ENCODE measurements at regions of chr5 and their contacts with region 1.

Region 1: DNA sequence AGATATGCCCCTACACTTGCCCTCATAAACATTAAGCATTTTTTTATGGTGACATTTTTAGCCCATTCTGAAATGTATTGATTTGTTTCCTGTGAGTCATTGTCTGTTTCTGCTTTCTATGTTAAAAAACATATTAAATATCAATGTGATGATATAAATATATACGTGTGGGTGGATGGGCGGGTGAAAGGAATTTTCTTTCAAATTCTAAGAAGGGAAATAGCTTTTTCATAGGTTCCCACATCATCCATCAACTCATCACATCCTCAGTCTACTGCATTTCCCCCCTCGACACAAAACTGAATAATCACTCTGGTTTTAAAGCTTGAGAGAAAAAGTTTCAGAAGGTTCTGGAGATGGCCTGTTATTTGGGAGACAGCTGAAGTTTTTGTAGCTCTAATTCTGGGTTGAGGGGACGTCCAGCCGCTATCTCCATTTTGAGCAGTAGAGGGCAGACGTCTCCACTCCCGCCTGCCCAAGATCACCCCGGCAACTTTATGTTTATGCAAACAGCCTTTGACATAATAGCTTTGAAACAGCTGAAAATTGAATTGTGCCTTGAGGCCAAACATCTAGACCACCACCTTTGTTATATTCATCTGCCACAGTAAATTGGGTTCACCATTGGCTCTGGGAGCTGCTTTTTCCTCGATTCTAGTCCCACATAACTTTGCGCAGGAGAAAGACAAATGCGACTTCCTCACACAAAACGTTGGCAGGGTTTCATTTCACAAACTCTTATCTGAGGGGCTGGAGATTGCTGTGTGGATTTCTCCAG is 216.2 kb upstream of the CLINT1 start:
- DNase-seq: peak; percentile 12
- H3K4me3 Mint-ChIP-seq: no peak overlapping the region
- H3K27ac Mint-ChIP-seq: no peak overlapping the region
- H3K4me1 Mint-ChIP-seq: no peaks in the 10 kb centered on the region
- H3K27me3 Mint-ChIP-seq: peaks cover 16% of the 10 kb centered on the region

Region 2: GRCh38 chr5:159133041-159133741 is 1058.0 kb after region 1 on chr5:
- intact Hi-C with region 1: loop called (anchors 1 kb)
- DNase-seq: no peak
- H3K4me3 Mint-ChIP-seq: no peak overlapping the region
- H3K27ac Mint-ChIP-seq: no peak overlapping the region
- H3K4me1 Mint-ChIP-seq: no peaks in the 10 kb centered on the region
- H3K27me3 Mint-ChIP-seq: peaks cover 23% of the 10 kb centered on the region